ENCODE measurements at regions of chr15 and their contacts with region 1.

Region 1: GRCh38 chr15:65804252-65804931 is 12.3 kb upstream of the DENND4A start:
- DNase-seq: no peak
- ATAC-seq: no peak
- H3K4me3 ChIP-seq: no peak overlapping the region
- H3K4me3 Mint-ChIP-seq: no peak overlapping the region
- H3K27ac ChIP-seq: peak overlapping the region in 1 of 2 donors; percentile 13
- H3K27ac Mint-ChIP-seq: peak overlapping the region; percentile 54
- H3K4me1 ChIP-seq: peaks cover 19% of the 10 kb centered on the region
- H3K4me1 Mint-ChIP-seq: peaks cover 37% of the 10 kb centered on the region
- H3K27me3 ChIP-seq: no peaks in the 10 kb centered on the region
- H3K27me3 Mint-ChIP-seq: no peaks in the 10 kb centered on the region
- CTCF ChIP-seq: no peak

Region 2: DNA sequence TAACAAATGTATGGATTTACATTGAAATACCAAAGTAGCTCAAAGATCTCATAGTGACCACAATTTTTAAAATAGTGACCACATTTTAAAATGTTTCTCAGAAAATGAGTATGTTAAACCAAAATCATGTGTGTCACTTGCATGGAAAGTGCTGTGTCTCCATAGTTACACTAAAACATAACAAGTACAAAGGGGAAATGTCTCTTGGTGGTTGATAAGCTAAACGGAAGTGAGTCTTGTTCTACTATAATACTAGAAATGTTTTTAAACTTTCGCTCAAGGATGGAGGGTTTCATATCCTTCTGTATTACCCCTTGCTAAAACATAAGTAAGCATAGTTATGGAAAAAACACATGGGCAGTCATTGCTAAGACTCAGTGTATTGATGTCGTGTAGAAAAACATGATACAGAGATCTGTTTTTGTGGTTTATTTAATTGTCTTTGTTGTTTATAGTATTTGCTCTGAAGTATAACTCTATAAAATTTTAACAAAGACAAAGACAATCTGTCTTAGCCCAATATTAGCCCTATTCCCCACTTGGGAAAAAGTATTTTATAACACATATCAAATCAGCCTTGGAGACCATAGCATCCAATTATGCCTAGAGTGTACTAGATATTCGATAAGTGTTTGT is 14.7 kb after region 1 on chr15:
- CTCF ChIA-PET with region 1: interaction called, 3 read pairs
- POLR2A ChIA-PET with region 1: interaction called, 28 read pairs
- intact Hi-C with region 1: no loop called
- DNase-seq: peak in 3 of 14 experiments; percentile 89 to 95 (median 92)
- ATAC-seq: peak; percentile 90
- H3K4me3 ChIP-seq: no peak overlapping the region
- H3K4me3 Mint-ChIP-seq: peak overlapping the region; percentile 59
- H3K27ac ChIP-seq: peak overlapping the region; percentile 82 to 94
- H3K27ac Mint-ChIP-seq: peak overlapping the region; percentile 94
- H3K4me1 ChIP-seq: peaks cover 51% of the 10 kb centered on the region
- H3K4me1 Mint-ChIP-seq: peaks cover 60% of the 10 kb centered on the region
- H3K27me3 ChIP-seq: no peaks in the 10 kb centered on the region
- H3K27me3 Mint-ChIP-seq: no peaks in the 10 kb centered on the region
- CTCF ChIP-seq: no peak

Region 3: DNA sequence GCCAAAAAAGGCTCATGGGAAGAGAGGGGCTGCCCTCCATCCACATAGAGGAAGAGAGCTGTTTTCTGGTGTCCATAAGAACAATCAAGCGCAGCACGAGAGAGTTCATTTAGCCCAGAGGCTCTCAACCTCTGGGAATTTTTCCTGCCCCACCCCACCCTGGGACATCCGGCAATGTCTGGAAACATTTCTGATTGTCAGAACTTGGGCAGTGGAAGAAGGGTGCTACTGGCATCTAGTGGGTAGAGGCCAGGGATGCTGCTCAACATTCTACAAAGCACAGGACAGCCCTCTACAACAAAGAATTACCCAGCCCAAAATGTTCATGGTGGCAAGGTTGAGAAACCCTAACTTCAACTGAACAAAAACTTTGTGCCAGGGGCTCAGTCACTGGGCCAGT is 157.8 kb after region 1 on chr15:
- CTCF ChIA-PET with region 1: no interaction called
- POLR2A ChIA-PET with region 1: no interaction called
- intact Hi-C with region 1: no loop called
- DNase-seq: no peak
- ATAC-seq: no peak
- H3K4me3 ChIP-seq: no peak overlapping the region
- H3K4me3 Mint-ChIP-seq: no peak overlapping the region
- H3K27ac ChIP-seq: no peak overlapping the region
- H3K27ac Mint-ChIP-seq: no peak overlapping the region
- H3K4me1 ChIP-seq: no peaks in the 10 kb centered on the region
- H3K4me1 Mint-ChIP-seq: no peaks in the 10 kb centered on the region
- H3K27me3 ChIP-seq: peaks cover 4 to 12% of the 10 kb centered on the region in 2 experiments
- H3K27me3 Mint-ChIP-seq: peaks cover 27% of the 10 kb centered on the region
- CTCF ChIP-seq: no peak

Measured in CD4-positive, alpha-beta T cell (primary cell).